CD4-positive, alpha-beta T cell (primary cell): ENCODE measurements at regions of chr4 and their contacts with region 1.

Region 1: DNA sequence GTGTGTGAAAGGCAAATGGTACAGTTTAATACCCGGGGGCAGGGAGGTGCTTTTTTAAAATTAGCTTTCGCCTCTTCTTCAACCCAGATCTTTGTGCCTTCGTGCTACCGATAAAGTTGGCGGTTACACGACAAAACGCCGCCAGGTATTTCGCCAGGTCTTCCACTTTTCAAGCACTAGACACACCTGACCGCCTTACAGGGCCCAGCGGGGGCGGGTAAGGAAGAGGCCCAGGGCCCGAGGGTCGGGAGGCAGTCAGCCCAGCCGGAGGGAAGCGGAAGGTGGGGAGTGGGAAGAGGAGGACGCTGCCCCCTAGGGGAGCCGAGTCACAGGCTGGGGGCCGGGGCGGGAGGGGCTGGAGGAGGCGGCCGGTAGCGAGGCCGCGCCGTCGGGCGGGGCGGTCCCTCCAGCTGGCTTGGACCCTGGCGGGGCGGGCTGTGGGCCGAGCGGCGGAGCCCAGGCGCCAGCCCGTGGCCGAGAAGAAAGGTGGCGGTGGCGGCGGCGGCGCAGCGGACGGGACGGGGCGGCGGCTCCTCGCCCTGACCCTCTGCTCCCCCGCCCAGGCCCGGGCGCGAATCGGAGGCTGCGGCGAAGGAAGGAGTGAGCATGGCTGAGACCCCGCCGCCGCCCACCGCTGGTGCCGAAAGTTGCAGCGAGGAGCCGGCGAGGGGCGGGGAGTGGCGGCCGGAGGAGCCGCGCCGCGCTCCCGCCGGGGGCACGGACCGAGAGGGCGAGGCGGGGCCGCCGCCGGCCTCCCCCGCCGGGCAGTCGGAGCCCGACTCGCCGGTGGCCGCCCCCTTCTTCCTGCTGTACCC is 16.2 kb downstream of the UTP3 start:
- DNase-seq: peak in 13 of 14 experiments; percentile 26 to 82 (median 51)
- ATAC-seq: peak; percentile 41
- H3K4me3 ChIP-seq: peak overlapping the region; percentile 66
- H3K4me3 Mint-ChIP-seq: peak overlapping the region; percentile 94
- H3K27ac ChIP-seq: peak overlapping the region; percentile 61 to 71
- H3K27ac Mint-ChIP-seq: peak overlapping the region; percentile 91
- H3K4me1 ChIP-seq: peaks cover 24% of the 10 kb centered on the region
- H3K4me1 Mint-ChIP-seq: peaks cover 39% of the 10 kb centered on the region
- H3K27me3 ChIP-seq: no peaks in the 10 kb centered on the region
- H3K27me3 Mint-ChIP-seq: no peaks in the 10 kb centered on the region
- CTCF ChIP-seq: peak; percentile 27

Region 2: DNA sequence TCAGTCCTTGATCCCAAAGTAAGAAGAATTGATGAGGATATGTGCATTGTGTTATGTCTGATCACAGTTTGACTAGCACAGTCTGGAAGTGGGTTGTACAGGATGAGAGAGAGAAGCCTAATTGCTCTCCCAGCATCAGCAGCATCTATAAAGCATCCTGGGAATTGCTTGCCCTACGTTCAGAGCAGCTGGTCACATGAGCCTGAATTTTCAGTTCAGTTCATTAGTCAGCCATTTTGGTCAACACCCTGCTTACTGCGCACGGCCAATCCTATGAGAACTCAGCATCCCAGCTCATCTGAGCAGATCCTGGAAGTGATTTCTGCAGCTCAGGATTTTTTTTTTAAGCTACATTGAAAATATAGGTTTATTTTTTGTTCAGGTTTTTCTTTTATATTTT is 17.2 kb after region 1 on chr4 and contains the start of gene RUFY3:
- CTCF ChIA-PET with region 1: interaction called, 9 read pairs
- POLR2A ChIA-PET with region 1: interaction called, 20 read pairs
- intact Hi-C with region 1: no loop called
- DNase-seq: no peak
- ATAC-seq: no peak
- H3K4me3 ChIP-seq: no peak within 1 kb of the TSS
- H3K4me3 Mint-ChIP-seq: peak within 1 kb of the TSS; percentile 26
- H3K27ac ChIP-seq: peak within 1 kb of the TSS in 1 of 2 donors; percentile 26
- H3K27ac Mint-ChIP-seq: peak within 1 kb of the TSS; percentile 27
- H3K4me1 ChIP-seq: peaks cover 11% of the 10 kb centered on the region
- H3K4me1 Mint-ChIP-seq: peaks cover 22% of the 10 kb centered on the region
- H3K27me3 ChIP-seq: no peaks in the 10 kb centered on the region
- H3K27me3 Mint-ChIP-seq: no peaks in the 10 kb centered on the region
- CTCF ChIP-seq: no peak
- total RNA-seq, gene RUFY3: 18.0 to 18.1 TPM

Region 3: DNA sequence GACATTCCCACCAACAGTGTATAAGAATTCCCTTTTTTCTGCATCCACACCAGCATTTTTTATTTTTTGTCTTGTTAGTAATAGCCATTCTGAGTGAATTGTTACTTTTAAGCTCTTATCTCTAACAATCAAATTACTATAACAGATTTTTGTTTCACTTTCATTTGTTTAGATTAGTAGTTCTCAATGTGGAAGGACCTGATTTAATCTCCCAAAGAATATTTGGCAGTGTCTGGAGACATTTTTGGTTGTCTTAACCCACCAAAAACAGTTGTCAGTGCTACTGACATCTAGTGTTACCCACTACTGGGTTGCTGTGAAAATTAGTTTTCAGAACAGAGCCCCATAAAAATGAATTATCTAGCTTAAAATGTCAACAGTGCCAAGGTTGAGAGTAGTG is 55.1 kb after region 1 on chr4:
- CTCF ChIA-PET with region 1: interaction called, 4 read pairs
- POLR2A ChIA-PET with region 1: interaction called, 19 read pairs
- intact Hi-C with region 1: no loop called
- DNase-seq: peak in 1 of 14 experiments; percentile 44
- ATAC-seq: no peak
- H3K4me3 ChIP-seq: no peak overlapping the region
- H3K4me3 Mint-ChIP-seq: peak overlapping the region; percentile 71
- H3K27ac ChIP-seq: no peak overlapping the region
- H3K27ac Mint-ChIP-seq: peak overlapping the region; percentile 56
- H3K4me1 ChIP-seq: no peaks in the 10 kb centered on the region
- H3K4me1 Mint-ChIP-seq: peaks cover 15% of the 10 kb centered on the region
- H3K27me3 ChIP-seq: no peaks in the 10 kb centered on the region
- H3K27me3 Mint-ChIP-seq: no peaks in the 10 kb centered on the region
- CTCF ChIP-seq: no peak

Region 4: DNA sequence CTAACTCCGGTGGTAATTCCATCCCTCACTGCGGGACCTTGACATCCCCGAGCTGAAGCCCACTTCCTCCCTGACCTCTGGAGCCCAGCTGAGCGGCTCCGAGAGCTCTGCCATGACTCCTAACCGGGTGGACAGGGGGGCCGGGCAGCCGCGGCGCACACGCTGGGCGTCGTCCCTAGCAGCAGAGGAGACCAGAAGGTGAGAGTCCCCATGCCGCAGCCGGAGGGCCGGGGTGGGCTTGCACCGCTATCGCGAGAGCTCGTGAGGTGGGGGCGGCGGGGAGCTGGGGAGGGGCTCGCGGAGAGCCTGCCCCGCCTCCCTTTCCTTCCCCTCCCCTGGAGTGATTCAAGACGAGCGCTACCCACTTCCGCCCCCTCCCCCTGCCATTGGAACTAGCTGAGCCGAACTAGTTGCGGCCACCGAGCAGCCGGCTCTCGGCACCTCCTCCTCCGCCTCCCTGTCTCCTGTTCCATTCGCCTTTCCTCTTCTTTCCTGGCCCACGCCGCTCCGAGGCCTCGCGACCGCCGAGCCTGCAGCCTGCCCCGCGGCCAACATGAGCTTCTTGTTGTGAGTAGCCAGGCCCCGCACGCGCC is 197.5 kb after region 1 on chr4 and contains the start of gene MOB1B:
- CTCF ChIA-PET with region 1: interaction called, 3 read pairs
- POLR2A ChIA-PET with region 1: interaction called, 18 read pairs
- intact Hi-C with region 1: no loop called
- DNase-seq: peak; percentile 69 to 92 (median 82)
- ATAC-seq: peak; percentile 97
- H3K4me3 ChIP-seq: peak within 1 kb of the TSS; percentile 74
- H3K4me3 Mint-ChIP-seq: peak within 1 kb of the TSS; percentile 100
- H3K27ac ChIP-seq: peak within 1 kb of the TSS in 1 of 2 donors; percentile 16
- H3K27ac Mint-ChIP-seq: peak within 1 kb of the TSS; percentile 85
- H3K4me1 ChIP-seq: peaks cover 16% of the 10 kb centered on the region
- H3K4me1 Mint-ChIP-seq: peaks cover 48% of the 10 kb centered on the region
- H3K27me3 ChIP-seq: no peaks in the 10 kb centered on the region
- H3K27me3 Mint-ChIP-seq: no peaks in the 10 kb centered on the region
- CTCF ChIP-seq: peak; percentile 27
- total RNA-seq, gene MOB1B: 13.1 to 13.4 TPM